Dorsolateral prefrontal cortex (tissue), 120 donors: ENCODE measurements at regions of chr6 and their contacts with region 1.

Region 1: GRCh38 chr6:134647861-134648260 is 302.0 kb downstream of the ALDH8A1 start:
- DNase-seq: no peak
- H3K4me3 ChIP-seq: no peak overlapping the region
- H3K27ac ChIP-seq: no peak overlapping the region
- H3K27me3 ChIP-seq: no peaks in the 10 kb centered on the region
- CTCF ChIP-seq: no peak

Region 2: GRCh38 chr6:134686071-134686470 is 38.2 kb after region 1 on chr6:
- intact Hi-C with region 1: loop called in 1 of 2 experiments (anchors 5 kb)
- DNase-seq: no peak
- H3K4me3 ChIP-seq: no peak overlapping the region
- H3K27ac ChIP-seq: peak overlapping the region in 41 of 59 donors; percentile 5 to 81 (median 53)
- H3K27me3 ChIP-seq: no peaks in the 10 kb centered on the region
- CTCF ChIP-seq: no peak